ENCODE measurements at regions of chr3 and their contacts with region 1.

Region 1: GRCh38 chr3:40584625-40585189 is 59.9 kb downstream of the ZNF621 start:
- DNase-seq: peak; percentile 78
- ATAC-seq: peak; percentile 86
- H3K4me3 Mint-ChIP-seq: no peak overlapping the region
- H3K27ac Mint-ChIP-seq: no peak overlapping the region
- H3K4me1 Mint-ChIP-seq: peaks cover 5% of the 10 kb centered on the region
- H3K27me3 Mint-ChIP-seq: peaks cover 15% of the 10 kb centered on the region
- CTCF ChIP-seq: peak; percentile 91

Region 2: DNA sequence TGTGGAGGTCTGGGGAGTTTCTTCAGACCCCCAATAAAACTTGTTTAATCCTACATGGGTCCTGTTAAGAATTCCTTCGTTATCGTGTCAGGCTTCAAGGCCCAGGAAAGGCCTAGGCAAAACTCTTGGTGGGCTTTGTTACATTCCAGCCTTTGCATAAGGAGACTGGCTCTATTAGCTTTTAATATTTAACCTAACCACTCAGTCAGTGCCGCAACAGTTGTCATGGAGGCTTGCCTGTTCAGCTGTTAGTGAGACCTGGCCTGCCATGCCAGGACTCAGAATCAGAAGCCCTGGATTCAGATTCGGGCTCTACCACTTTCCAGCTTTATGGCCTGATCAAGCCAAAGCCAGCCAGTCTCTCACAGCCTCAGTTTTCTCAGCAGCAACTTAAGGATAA is 255.6 kb before region 1 on chr3:
- CTCF ChIA-PET with region 1: interaction called, 10 read pairs
- POLR2A ChIA-PET with region 1: no interaction called
- intact Hi-C with region 1: loop called (anchors 1 kb)
- DNase-seq: no peak
- ATAC-seq: no peak
- H3K4me3 Mint-ChIP-seq: no peak overlapping the region
- H3K27ac Mint-ChIP-seq: no peak overlapping the region
- H3K4me1 Mint-ChIP-seq: peaks cover 4% of the 10 kb centered on the region
- H3K27me3 Mint-ChIP-seq: peaks cover 2% of the 10 kb centered on the region
- CTCF ChIP-seq: no peak

Region 3: GRCh38 chr3:40642812-40643211 is 58.1 kb after region 1 on chr3:
- CTCF ChIA-PET with region 1: no interaction called
- POLR2A ChIA-PET with region 1: no interaction called
- intact Hi-C with region 1: no loop called
- DNase-seq: no peak
- ATAC-seq: no peak
- H3K4me3 Mint-ChIP-seq: no peak overlapping the region
- H3K27ac Mint-ChIP-seq: no peak overlapping the region
- H3K4me1 Mint-ChIP-seq: peaks cover 3% of the 10 kb centered on the region
- H3K27me3 Mint-ChIP-seq: no peaks in the 10 kb centered on the region
- CTCF ChIP-seq: no peak

Region 4: GRCh38 chr3:40680685-40681657 is 96.3 kb after region 1 on chr3:
- CTCF ChIA-PET with region 1: interaction called, 13 read pairs
- POLR2A ChIA-PET with region 1: no interaction called
- intact Hi-C with region 1: loop called (anchors 1 kb)
- DNase-seq: no peak
- ATAC-seq: peak; percentile 80
- H3K4me3 Mint-ChIP-seq: no peak overlapping the region
- H3K27ac Mint-ChIP-seq: peak overlapping the region; percentile 3
- H3K4me1 Mint-ChIP-seq: peaks cover 22% of the 10 kb centered on the region
- H3K27me3 Mint-ChIP-seq: no peaks in the 10 kb centered on the region
- CTCF ChIP-seq: no peak

Region 5: DNA sequence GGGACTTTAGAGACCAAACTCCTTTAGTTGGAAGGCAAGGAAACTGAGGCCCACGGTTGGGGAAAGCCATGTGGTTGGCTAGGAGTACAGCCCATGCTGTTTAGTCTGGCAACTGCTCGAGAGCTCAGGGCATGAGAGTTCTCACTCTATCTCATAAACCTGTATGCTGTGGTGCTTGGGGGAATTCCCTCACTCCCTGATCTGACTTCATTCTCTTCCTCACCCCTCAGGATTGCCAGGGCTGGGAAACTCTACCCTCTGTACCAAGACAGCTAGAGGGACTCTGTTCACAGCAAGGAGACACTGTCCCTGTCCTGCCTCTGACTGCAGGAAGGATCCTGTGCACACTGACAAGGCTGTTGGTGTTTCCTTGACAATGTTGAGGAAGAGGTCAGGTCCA is 170.3 kb after region 1 on chr3:
- CTCF ChIA-PET with region 1: no interaction called
- POLR2A ChIA-PET with region 1: no interaction called
- intact Hi-C with region 1: no loop called
- DNase-seq: no peak
- ATAC-seq: no peak
- H3K4me3 Mint-ChIP-seq: no peak overlapping the region
- H3K27ac Mint-ChIP-seq: no peak overlapping the region
- H3K4me1 Mint-ChIP-seq: no peaks in the 10 kb centered on the region
- H3K27me3 Mint-ChIP-seq: peaks cover 12% of the 10 kb centered on the region
- CTCF ChIP-seq: no peak

Region 6: DNA sequence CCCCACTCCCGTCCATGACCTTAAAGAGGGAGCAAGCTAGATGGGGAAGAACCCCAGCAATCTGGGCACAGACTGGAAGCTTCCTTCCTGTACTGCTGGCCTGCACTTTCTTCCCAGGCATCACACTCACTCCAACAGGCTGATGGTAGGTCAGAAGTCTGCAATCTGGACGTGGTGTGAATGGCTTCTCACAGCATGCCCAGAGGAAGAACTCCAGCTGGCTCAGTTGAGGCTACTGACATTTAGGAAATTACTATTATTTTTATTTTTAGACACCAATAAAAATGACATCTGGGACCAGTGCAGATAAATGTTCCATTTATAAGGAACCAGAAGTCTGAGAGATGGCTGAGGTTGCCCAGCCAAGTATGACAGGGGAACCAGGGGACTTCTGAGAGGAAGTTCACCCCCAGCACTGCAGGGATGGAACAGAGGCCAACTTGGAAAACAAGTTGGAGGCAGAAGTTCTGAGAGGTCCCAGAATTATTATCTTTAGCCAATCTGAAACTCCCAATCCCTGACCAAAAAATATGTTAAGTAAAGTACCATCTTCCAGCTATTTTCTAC is 450.8 kb after region 1 on chr3:
- CTCF ChIA-PET with region 1: no interaction called
- POLR2A ChIA-PET with region 1: no interaction called
- intact Hi-C with region 1: loop called (anchors 10 kb)
- DNase-seq: no peak
- ATAC-seq: no peak
- H3K4me3 Mint-ChIP-seq: no peak overlapping the region
- H3K27ac Mint-ChIP-seq: no peak overlapping the region
- H3K4me1 Mint-ChIP-seq: peaks cover 10% of the 10 kb centered on the region
- H3K27me3 Mint-ChIP-seq: peaks cover 15% of the 10 kb centered on the region
- CTCF ChIP-seq: no peak

Region 7: DNA sequence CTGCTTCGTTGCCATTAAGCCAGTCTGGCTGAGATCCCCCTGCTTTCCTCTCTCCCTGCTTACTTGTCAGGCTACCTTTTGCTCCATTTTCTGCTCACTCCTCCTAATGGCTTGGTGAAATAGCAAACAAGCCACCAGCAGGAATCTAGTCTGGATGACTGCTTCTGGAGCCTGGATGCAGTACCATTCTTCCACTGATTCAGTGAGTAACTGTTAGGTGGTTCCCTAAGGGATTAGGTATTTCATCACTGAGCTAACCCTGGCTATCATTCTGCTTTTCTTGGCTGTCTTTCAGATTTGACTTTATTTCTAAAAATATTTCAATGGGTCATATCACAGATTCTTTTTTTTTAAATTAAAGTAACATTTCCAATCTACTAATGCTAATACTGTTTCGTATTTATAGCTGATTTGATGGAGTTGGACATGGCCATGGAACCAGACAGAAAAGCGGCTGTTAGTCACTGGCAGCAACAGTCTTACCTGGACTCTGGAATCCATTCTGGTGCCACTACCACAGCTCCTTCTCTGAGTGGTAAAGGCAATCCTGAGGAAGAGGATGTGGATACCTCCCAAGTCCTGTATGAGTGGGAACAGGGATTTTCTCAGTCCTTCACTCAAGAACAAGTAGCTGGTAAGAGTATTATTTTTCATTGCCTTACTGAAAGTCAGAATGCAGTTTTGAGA is 639.6 kb after region 1 on chr3:
- CTCF ChIA-PET with region 1: no interaction called
- POLR2A ChIA-PET with region 1: no interaction called
- intact Hi-C with region 1: loop called (anchors 5 kb)
- DNase-seq: no peak
- ATAC-seq: no peak
- H3K4me3 Mint-ChIP-seq: no peak overlapping the region
- H3K27ac Mint-ChIP-seq: no peak overlapping the region
- H3K4me1 Mint-ChIP-seq: peaks cover 52% of the 10 kb centered on the region
- H3K27me3 Mint-ChIP-seq: no peaks in the 10 kb centered on the region
- CTCF ChIP-seq: no peak

Region 8: DNA sequence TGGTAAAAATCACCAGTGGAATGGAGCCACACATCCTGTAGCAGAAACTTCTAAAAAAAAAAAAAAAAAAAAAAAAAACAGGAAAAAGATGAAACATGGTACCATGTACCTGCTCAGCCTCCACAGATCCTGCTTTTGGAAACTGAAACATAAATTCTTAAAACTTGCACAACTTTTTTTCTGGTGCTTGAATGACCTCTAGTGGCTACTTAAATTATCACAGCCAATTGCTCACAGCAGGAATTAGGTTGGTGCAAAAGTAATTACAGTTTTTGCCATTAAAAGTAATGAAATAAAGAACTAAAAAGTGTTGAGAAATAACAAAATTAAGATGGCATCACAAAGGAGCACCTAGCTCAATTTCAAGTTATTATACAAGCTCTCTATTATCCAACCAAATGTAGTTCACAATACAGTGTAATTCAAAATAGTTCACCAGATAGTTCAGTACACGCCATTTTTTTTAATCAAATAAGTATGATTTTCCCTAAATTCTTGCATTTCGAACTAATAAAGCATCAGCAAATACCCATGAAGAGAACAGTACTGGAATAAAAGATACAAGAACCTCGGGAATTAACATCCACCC is 1296.6 kb after region 1 on chr3:
- CTCF ChIA-PET with region 1: interaction called, 75 read pairs
- POLR2A ChIA-PET with region 1: no interaction called
- intact Hi-C with region 1: loop called (anchors 1 kb)
- DNase-seq: no peak
- ATAC-seq: no peak
- H3K4me3 Mint-ChIP-seq: no peak overlapping the region
- H3K27ac Mint-ChIP-seq: no peak overlapping the region
- H3K4me1 Mint-ChIP-seq: no peaks in the 10 kb centered on the region
- H3K27me3 Mint-ChIP-seq: no peaks in the 10 kb centered on the region
- CTCF ChIP-seq: peak; percentile 74